ENCODE measurements at regions of chr12 and their contacts with region 1.

Region 1: GRCh38 chr12:1474574-1475153 is 119.7 kb downstream of the FBXL14 start:
- DNase-seq: no peak
- H3K4me3 ChIP-seq: peak overlapping the region; percentile 28 to 37
- H3K27ac ChIP-seq: peak overlapping the region; percentile 56 to 67
- H3K4me1 ChIP-seq: peaks cover 0 to 69% (median 47%) of the 10 kb centered on the region in 4 donors
- H3K27me3 ChIP-seq: no peaks in the 10 kb centered on the region
- CTCF ChIP-seq: no peak

Region 2: GRCh38 chr12:1496162-1496900 is 21.7 kb after region 1 on chr12:
- intact Hi-C with region 1: loop called (anchors 1 kb)
- DNase-seq: peak in 1 of 2 donors; percentile 79
- H3K4me3 ChIP-seq: peak overlapping the region; percentile 32 to 43
- H3K27ac ChIP-seq: peak overlapping the region; percentile 57 to 73
- H3K4me1 ChIP-seq: peaks cover 0 to 17% (median 11%) of the 10 kb centered on the region in 4 donors
- H3K27me3 ChIP-seq: no peaks in the 10 kb centered on the region
- CTCF ChIP-seq: no peak

Measured in tibial artery (tissue), 4 donors.